OCI-LY7 (cell line): ENCODE measurements at regions of chr19 and their contacts with region 1.

Region 1: DNA sequence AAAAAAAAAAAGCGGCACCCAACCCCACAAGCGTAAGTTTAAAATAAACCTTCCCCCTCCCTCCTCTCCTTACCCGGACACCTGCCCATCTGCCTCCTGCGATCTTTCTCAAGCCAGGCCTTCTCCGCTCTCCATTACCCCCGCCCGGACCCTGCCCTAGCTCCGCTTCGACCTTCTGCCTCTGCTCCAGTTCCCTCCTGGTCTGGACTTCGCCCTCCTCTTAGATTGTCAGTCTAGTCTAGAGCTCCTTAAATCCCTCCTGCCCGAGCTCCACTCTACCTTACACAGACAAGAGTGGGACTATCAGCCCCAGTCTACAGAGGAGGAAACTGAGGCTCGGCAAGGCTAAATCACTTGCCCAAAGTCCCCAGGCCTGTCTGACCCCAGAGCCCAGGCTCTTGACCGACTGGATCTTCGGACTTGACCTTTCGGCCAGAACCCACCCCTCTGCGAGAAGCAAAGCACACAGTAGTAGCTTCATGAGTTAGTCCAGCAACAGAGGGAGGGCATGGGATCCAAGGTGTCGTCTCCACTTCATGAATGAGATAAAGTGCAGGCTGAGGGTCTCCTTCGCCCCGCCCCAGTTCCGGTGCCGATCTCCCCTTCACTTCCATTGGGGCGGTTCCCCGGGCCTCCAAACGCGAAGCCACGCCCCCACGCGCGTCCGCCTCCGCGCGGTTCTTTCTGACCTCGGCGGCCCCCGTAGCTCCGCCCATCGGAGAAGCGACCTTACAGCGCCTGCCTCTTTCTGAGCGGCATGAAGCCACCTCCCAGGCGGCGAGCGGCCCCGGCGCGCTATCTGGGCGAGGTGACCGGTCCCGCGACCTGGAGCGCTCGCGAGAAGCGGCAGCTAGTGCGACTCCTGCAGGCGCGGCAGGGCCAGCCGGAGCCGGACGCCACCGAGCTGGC is at the start of gene SNAPC2:
- DNase-seq: peak; percentile 96
- H3K4me3 ChIP-seq: peak within 1 kb of the TSS; percentile 73
- H3K27ac ChIP-seq: peak within 1 kb of the TSS; percentile 59
- H3K4me1 ChIP-seq: peaks cover 16% of the 10 kb centered on the region
- CTCF ChIP-seq: no peak
- total RNA-seq, gene SNAPC2: 4.9 and 21.6 TPM in 2 replicates

Region 2: DNA sequence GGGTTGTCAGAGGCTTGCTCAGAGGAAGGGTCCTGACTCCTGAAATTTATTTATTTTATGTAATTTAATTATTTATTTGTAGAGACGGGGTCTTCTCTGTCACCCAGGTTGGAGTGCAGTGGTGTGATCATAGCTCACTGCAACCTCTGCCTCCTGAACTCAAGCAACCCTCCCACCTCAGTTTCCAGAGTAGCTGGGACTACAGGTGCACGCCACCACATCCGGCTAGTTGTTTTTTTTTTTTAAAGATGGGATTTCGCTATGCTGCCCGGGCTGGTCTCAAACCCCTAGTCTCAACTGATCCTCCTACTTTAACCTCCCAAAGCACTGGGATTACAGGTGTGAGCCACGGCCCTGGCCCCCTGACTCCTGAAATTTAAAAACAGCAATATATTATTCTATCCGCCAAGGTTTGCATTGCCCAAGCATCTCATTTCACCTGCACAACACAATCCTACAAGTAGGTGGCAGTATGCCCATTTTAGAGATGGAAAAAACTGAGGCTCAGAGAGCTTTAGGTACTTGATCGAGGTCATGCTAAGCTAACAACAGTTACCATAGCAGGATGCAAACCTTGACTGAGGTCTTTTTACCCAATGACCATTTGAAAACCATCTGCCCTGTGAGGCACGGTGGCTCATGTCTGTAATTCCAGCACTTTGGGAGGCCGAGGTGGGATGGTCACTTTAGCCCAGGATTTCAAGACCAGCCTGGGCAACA is 553.0 kb before region 1 on chr19:
- CTCF ChIA-PET with region 1: interaction called, 10 read pairs
- POLR2A ChIA-PET with region 1: no interaction called
- intact Hi-C with region 1: no loop called
- DNase-seq: peak; percentile 69
- H3K4me3 ChIP-seq: no peak overlapping the region
- H3K27ac ChIP-seq: peak overlapping the region; percentile 24
- H3K4me1 ChIP-seq: peaks cover 9% of the 10 kb centered on the region
- CTCF ChIP-seq: peak; percentile 84

Region 3: GRCh38 chr19:7819337-7819736 is 100.5 kb before region 1 on chr19:
- CTCF ChIA-PET with region 1: no interaction called
- POLR2A ChIA-PET with region 1: no interaction called
- intact Hi-C with region 1: no loop called
- DNase-seq: no peak
- H3K4me3 ChIP-seq: no peak overlapping the region
- H3K27ac ChIP-seq: no peak overlapping the region
- H3K4me1 ChIP-seq: no peaks in the 10 kb centered on the region
- CTCF ChIP-seq: no peak

Region 4: GRCh38 chr19:7852851-7853769 is 66.8 kb before region 1 on chr19:
- CTCF ChIA-PET with region 1: no interaction called
- POLR2A ChIA-PET with region 1: no interaction called
- intact Hi-C with region 1: loop called (anchors 1 kb)
- DNase-seq: peak; percentile 74
- H3K4me3 ChIP-seq: no peak overlapping the region
- H3K27ac ChIP-seq: no peak overlapping the region
- H3K4me1 ChIP-seq: peaks cover 3% of the 10 kb centered on the region
- CTCF ChIP-seq: peak; percentile 87

Region 5: GRCh38 chr19:7871530-7872305 is 48.1 kb before region 1 on chr19:
- CTCF ChIA-PET with region 1: interaction called, 6 read pairs
- POLR2A ChIA-PET with region 1: interaction called, 3 read pairs
- intact Hi-C with region 1: loop called (anchors 2 kb)
- DNase-seq: peak; percentile 84
- H3K4me3 ChIP-seq: peak overlapping the region; percentile 4
- H3K27ac ChIP-seq: peak overlapping the region; percentile 39
- H3K4me1 ChIP-seq: peaks cover 40% of the 10 kb centered on the region
- CTCF ChIP-seq: no peak

Region 6: GRCh38 chr19:7898967-7899366 is 20.9 kb before region 1 on chr19:
- CTCF ChIA-PET with region 1: interaction called, 14 read pairs
- POLR2A ChIA-PET with region 1: no interaction called
- intact Hi-C with region 1: no loop called
- DNase-seq: no peak
- H3K4me3 ChIP-seq: no peak overlapping the region
- H3K27ac ChIP-seq: no peak overlapping the region
- H3K4me1 ChIP-seq: peaks cover 8% of the 10 kb centered on the region
- CTCF ChIP-seq: no peak